ENCODE measurements at regions of chr18 and their contacts with region 1.

Region 1: DNA sequence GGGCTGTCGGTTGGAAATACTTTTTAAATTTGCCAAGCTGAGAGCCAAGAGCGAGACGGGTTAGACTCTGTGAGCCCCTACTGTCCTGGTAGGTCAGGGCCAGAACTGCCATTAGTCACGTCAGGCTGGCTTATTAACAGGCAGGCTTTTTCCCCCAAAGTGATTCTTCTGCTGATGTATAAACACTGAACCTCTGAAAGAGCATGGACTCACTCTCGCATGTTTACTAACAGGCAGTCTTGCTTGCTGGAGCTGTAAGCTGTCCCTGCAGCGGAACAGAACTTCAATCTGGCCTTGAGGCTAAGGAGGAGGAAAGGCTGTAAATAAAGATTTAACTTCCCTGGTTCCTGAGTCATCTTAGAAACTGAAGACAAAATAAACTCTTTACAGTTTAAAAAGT is 288.4 kb downstream of the PIEZO2 start:
- DNase-seq: no peak
- H3K4me3 ChIP-seq: no peak overlapping the region
- H3K27ac ChIP-seq: peak overlapping the region in 1 of 4 donors; percentile 23
- H3K4me1 ChIP-seq: peaks cover 0 to 14% (median 4%) of the 10 kb centered on the region in 4 donors
- H3K27me3 ChIP-seq: no peaks in the 10 kb centered on the region
- CTCF ChIP-seq: no peak
- EP300 ChIP-seq: no peak
- POLR2A ChIP-seq: no peak

Region 2: GRCh38 chr18:10822456-10822855 is 38.5 kb before region 1 on chr18:
- intact Hi-C with region 1: no loop called
- DNase-seq: no peak
- H3K4me3 ChIP-seq: no peak overlapping the region
- H3K27ac ChIP-seq: no peak overlapping the region
- H3K4me1 ChIP-seq: no peaks in the 10 kb centered on the region
- H3K27me3 ChIP-seq: no peaks in the 10 kb centered on the region
- CTCF ChIP-seq: no peak
- EP300 ChIP-seq: no peak
- POLR2A ChIP-seq: no peak

Region 3: DNA sequence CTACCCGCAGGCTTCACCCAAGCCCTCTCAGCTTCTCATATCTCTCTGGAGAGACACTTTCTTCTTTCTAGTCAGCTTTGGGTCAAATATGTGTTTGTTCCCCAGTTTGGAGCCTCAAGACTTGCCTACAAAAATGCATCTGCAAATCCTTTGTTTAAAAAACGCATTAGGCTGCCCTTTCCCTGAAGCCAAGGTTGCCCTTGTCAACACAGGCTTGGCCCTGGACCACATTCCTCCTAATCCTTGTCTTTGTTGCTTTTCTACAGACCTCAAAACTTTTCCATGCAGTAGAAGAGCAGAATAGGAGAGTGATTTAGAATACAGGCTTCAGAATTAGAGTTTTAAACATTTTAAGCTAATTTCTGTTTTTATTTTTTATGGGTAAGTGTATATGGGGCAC is 27.3 kb before region 1 on chr18:
- intact Hi-C with region 1: no loop called
- DNase-seq: no peak
- H3K4me3 ChIP-seq: no peak overlapping the region
- H3K27ac ChIP-seq: peak overlapping the region in 1 of 4 donors; percentile 14
- H3K4me1 ChIP-seq: no peaks in the 10 kb centered on the region
- H3K27me3 ChIP-seq: no peaks in the 10 kb centered on the region
- CTCF ChIP-seq: no peak
- EP300 ChIP-seq: no peak
- POLR2A ChIP-seq: no peak

Region 4: GRCh38 chr18:10928772-10929373 is 67.9 kb after region 1 on chr18:
- intact Hi-C with region 1: loop called (anchors 5 kb)
- DNase-seq: no peak
- H3K4me3 ChIP-seq: no peak overlapping the region
- H3K27ac ChIP-seq: peak overlapping the region in 2 of 4 donors; percentile 61 to 63
- H3K4me1 ChIP-seq: peaks cover 0 to 31% (median 22%) of the 10 kb centered on the region in 4 donors
- H3K27me3 ChIP-seq: no peaks in the 10 kb centered on the region
- CTCF ChIP-seq: no peak
- EP300 ChIP-seq: no peak
- POLR2A ChIP-seq: no peak